ENCODE measurements at regions of chr6 and their contacts with region 1.

Region 1: GRCh38 chr6:150417899-150418826 is 49.4 kb downstream of the IYD start:
- DNase-seq: peak in 3 of 5 donors; percentile 53 to 94 (median 92)
- H3K4me3 ChIP-seq: peak overlapping the region in 2 of 3 donors; percentile 36 to 59
- H3K27ac ChIP-seq: peak overlapping the region in 1 of 2 donors; percentile 35
- H3K4me1 ChIP-seq: peaks cover 0 to 3% (median 0%) of the 10 kb centered on the region in 3 donors
- H3K27me3 ChIP-seq: no peaks in the 10 kb centered on the region
- CTCF ChIP-seq: peak; percentile 90

Region 2: DNA sequence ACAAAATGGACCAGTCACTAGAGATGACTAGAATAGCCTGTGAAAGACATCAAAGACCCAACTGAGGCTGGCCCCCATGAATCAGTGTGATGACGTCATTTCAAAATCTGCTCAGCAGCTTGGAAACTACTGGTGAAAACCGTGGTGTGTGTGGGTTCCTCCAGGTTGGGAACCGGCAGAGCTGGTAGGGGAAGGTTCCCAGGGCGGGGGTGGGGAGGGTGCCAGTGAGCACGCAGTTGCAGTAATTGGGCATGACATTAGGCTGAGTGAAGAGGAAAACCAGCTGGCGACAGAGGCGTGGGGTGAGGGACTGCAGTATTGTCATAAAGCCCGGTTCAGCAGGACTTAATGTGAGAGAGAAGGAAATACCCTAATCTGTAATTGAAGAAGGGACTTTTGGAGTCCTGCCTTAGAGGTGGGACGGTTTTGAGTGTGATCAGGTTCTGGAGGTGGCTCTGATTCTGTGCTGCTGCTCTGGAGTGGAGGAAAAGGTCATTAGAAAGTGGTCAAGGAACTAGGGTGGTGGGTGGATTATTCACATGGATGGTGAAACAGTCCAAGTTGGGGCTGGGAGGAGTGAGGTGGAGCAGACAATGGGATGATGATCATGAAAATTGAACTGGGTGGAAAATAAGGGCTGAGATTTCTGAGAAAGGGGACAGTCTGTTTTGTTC is 395.3 kb after region 1 on chr6:
- intact Hi-C with region 1: loop called (anchors 10 kb)
- DNase-seq: peak in 4 of 5 donors; percentile 64 to 74 (median 71)
- H3K4me3 ChIP-seq: no peak overlapping the region
- H3K27ac ChIP-seq: peak overlapping the region; percentile 53 to 57
- H3K4me1 ChIP-seq: peaks cover 0 to 6% (median 0%) of the 10 kb centered on the region in 3 donors
- H3K27me3 ChIP-seq: no peaks in the 10 kb centered on the region
- CTCF ChIP-seq: no peak